Common myeloid progenitor, CD34-positive (primary cell): ENCODE measurements at regions of chr1 and their contacts with region 1.

Region 1: GRCh38 chr1:65195495-65196417 is 47.8 kb downstream of the AK4 start:
- DNase-seq: peak in 2 of 3 donors; percentile 53 to 56
- H3K4me3 ChIP-seq: no peak overlapping the region
- H3K27ac ChIP-seq: no peak overlapping the region
- H3K4me1 ChIP-seq: peaks cover 0 to 6% (median 2%) of the 10 kb centered on the region in 4 experiments
- H3K27me3 ChIP-seq: no peaks in the 10 kb centered on the region

Region 2: GRCh38 chr1:65067491-65068201 is 128.1 kb before region 1 on chr1:
- CTCF ChIA-PET with region 1: interaction called, 10 read pairs
- POLR2A ChIA-PET with region 1: interaction called, 3 read pairs
- DNase-seq: peak; percentile 68 to 88 (median 86)
- H3K4me3 ChIP-seq: peak overlapping the region; percentile 85 to 98 (median 95)
- H3K27ac ChIP-seq: peak overlapping the region; percentile 93 to 97
- H3K4me1 ChIP-seq: peaks cover 19 to 57% (median 35%) of the 10 kb centered on the region in 4 experiments
- H3K27me3 ChIP-seq: no peaks in the 10 kb centered on the region